ENCODE measurements at regions of chr9 and their contacts with region 1.

Region 1: GRCh38 chr9:17810728-17811571 is 232.1 kb downstream of the SH3GL2 start:
- DNase-seq: no peak
- H3K4me3 ChIP-seq: no peak overlapping the region
- H3K27me3 ChIP-seq: 0 out of 2 replicates have a peak, but pooled peaks cover 1% of the 10 kb centered on the region
- CTCF ChIP-seq: peak; percentile 81

Region 2: DNA sequence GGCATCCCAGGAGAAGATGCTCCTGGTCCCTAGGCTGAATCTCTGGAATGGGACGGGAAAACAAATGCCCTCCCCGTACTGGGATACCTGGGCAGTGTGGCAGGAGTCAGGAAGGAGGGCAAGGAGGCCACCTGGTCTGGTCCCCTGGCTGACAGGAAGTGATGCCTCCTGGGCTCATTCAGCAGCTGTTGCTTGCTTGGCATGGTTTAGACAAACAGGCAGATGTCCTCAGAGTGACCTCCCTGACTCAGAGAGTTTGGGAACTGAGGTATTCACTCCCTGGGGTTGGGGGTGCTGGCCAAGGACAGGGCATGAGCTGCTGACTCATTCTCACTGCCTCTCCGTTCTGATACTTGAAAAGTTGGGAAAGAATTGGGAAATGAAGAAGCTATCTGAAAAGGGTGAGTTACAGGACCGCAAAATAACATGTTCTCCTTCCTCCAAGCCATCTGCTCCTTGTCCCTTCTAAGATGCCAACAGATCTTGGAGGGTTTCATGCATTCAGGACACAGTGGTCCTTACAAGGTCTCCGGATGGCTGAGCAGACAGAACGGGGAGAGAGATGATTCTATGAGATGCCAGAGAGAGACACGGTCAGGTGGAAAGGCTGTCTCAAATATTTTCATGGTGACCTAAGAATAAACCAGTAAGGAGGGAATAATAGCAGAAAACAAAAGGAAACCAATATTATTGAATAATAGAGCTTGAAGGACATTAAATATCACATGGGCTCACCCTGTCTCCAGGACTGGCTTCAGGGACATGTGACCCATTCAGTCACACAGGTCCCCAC is 1475.0 kb before region 1 on chr9:
- CTCF ChIA-PET with region 1: no interaction called
- POLR2A ChIA-PET with region 1: no interaction called
- DNase-seq: peak; percentile 95
- H3K4me3 ChIP-seq: no peak overlapping the region
- H3K27me3 ChIP-seq: no peaks in the 10 kb centered on the region
- CTCF ChIP-seq: no peak

Region 3: GRCh38 chr9:17052626-17053025 is 758.3 kb before region 1 on chr9:
- CTCF ChIA-PET with region 1: no interaction called
- POLR2A ChIA-PET with region 1: interaction called, 10 read pairs
- DNase-seq: no peak
- H3K4me3 ChIP-seq: no peak overlapping the region
- H3K27me3 ChIP-seq: no peaks in the 10 kb centered on the region
- CTCF ChIP-seq: no peak

Region 4: DNA sequence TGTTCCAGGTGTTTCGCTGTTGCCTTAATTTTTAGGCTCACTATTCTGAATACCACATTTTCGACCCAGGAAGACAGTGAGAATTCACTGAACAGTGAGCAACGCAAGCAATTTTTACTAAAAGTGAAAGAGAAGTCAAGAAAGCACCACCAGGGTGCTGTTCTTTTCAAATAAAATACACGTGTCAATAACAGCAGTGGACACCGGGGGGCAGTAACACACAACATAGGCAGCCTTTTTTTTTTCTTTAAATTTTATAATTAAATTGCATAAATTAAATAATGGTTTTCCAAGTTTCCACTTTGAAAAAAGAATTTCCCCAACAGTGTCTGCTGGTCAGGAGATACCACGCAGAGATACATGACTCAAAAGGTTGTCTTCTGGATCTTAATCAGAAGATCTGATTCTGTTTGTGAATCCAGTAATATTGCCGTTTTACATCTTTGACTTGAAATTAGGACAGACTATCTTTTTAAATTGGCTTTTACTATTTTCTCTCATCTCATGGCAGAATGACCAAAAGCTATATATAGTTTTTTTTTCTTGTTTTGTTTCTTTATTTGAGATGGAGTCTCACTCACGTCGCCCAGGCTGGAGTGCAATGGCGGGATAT is 279.2 kb before region 1 on chr9:
- CTCF ChIA-PET with region 1: interaction called, 15 read pairs
- POLR2A ChIA-PET with region 1: no interaction called
- DNase-seq: no peak
- H3K4me3 ChIP-seq: no peak overlapping the region
- H3K27me3 ChIP-seq: 0 out of 2 replicates have a peak, but pooled peaks cover 2% of the 10 kb centered on the region
- CTCF ChIP-seq: peak; percentile 72

Region 5: GRCh38 chr9:17824191-17824590 is 13.2 kb after region 1 on chr9:
- CTCF ChIA-PET with region 1: interaction called, 15 read pairs
- POLR2A ChIA-PET with region 1: no interaction called
- DNase-seq: no peak
- H3K4me3 ChIP-seq: no peak overlapping the region
- H3K27me3 ChIP-seq: no peaks in the 10 kb centered on the region
- CTCF ChIP-seq: no peak

Region 6: GRCh38 chr9:18143028-18143745 is 332.2 kb after region 1 on chr9:
- CTCF ChIA-PET with region 1: interaction called, 11 read pairs
- POLR2A ChIA-PET with region 1: interaction called, 3 read pairs
- DNase-seq: no peak
- H3K4me3 ChIP-seq: no peak overlapping the region
- H3K27me3 ChIP-seq: no peaks in the 10 kb centered on the region
- CTCF ChIP-seq: peak; percentile 39; the same call in 1 of the 2 replicates

Region 7: GRCh38 chr9:18208154-18209059 is 397.5 kb after region 1 on chr9:
- CTCF ChIA-PET with region 1: interaction called, 53 read pairs
- POLR2A ChIA-PET with region 1: no interaction called
- DNase-seq: no peak
- H3K4me3 ChIP-seq: no peak overlapping the region
- H3K27me3 ChIP-seq: peaks cover 3% of the 10 kb centered on the region
- CTCF ChIP-seq: peak; percentile 62

Region 8: GRCh38 chr9:19028835-19029451 is 1218.0 kb after region 1 on chr9:
- CTCF ChIA-PET with region 1: interaction called, 30 read pairs
- POLR2A ChIA-PET with region 1: no interaction called
- DNase-seq: no peak
- H3K4me3 ChIP-seq: no peak overlapping the region
- H3K27me3 ChIP-seq: no peaks in the 10 kb centered on the region
- CTCF ChIP-seq: peak; percentile 68